ENCODE measurements at regions of chr3 and their contacts with region 1.

Region 1: GRCh38 chr3:108589146-108589997 is at the starts of genes CIP2A and DZIP3:
- DNase-seq: peak; percentile 93 to 94
- H3K4me3 ChIP-seq: peak within 1 kb of the TSS; percentile 89 to 96 (median 92)
- H3K27ac ChIP-seq: peak within 1 kb of the TSS; percentile 96
- H3K4me1 ChIP-seq: peaks cover 0 to 7% (median 2%) of the 10 kb centered on the region in 4 experiments; a peak in 2 of 7 replicates
- H3K27me3 ChIP-seq: no peaks in the 10 kb centered on the region
- CTCF ChIP-seq: no peak
- EP300 ChIP-seq: no peak
- POLR2A ChIP-seq: peak; percentile 96 to 98
- RAD21 ChIP-seq: no peak
- total RNA-seq, gene CIP2A: 38.0 and 39.6 TPM in 2 replicates
- total RNA-seq, gene DZIP3: 24.3 and 28.3 TPM in 2 replicates

Region 2: DNA sequence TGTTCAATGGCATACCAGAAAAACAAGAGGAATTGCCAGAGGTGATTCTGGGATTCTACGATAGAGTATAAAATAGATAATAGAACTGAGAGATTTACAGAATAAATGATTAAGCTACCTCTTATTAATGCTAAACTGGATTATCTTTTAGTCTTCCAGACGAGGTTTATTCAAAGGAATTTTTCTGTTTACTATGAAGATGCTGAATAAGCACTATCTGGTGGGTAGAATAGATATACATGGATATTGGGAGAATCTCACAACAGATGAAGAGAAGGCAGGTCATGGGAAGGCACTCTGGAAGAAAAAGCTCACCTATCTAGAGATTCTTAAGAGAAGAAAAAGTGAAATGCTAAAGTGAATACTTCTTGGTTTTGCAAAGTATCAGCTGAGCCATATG is 11.3 kb before region 1 on chr3:
- CTCF ChIA-PET with region 1: no interaction called
- POLR2A ChIA-PET with region 1: interaction called, 23 read pairs
- DNase-seq: no peak
- H3K4me3 ChIP-seq: no peak overlapping the region
- H3K27ac ChIP-seq: no peak overlapping the region
- H3K4me1 ChIP-seq: peaks cover 0 to 16% (median 7%) of the 10 kb centered on the region in 4 experiments; a peak in 4 of 7 replicates
- H3K27me3 ChIP-seq: no peaks in the 10 kb centered on the region
- CTCF ChIP-seq: no peak
- EP300 ChIP-seq: no peak
- POLR2A ChIP-seq: no peak
- RAD21 ChIP-seq: no peak

Region 3: GRCh38 chr3:108602249-108602934 is 13.0 kb after region 1 on chr3:
- CTCF ChIA-PET with region 1: interaction called, 16 read pairs
- POLR2A ChIA-PET with region 1: interaction called, 25 read pairs
- DNase-seq: no peak
- H3K4me3 ChIP-seq: no peak overlapping the region
- H3K27ac ChIP-seq: no peak overlapping the region
- H3K4me1 ChIP-seq: peaks cover 0 to 3% (median 1%) of the 10 kb centered on the region in 4 experiments; a peak in 2 of 7 replicates
- H3K27me3 ChIP-seq: no peaks in the 10 kb centered on the region
- CTCF ChIP-seq: no peak
- EP300 ChIP-seq: no peak
- POLR2A ChIP-seq: no peak
- RAD21 ChIP-seq: no peak